Activated CD8-positive, alpha-beta T cell treated with anti-CD3 and anti-CD28 coated beads for 36 hours (primary cell): ENCODE measurements at regions of chr5 and their contacts with region 1.

Region 1: GRCh38 chr5:108260117-108260857 is 121.6 kb downstream of the FBXL17 start:
- DNase-seq: peak; percentile 79
- ATAC-seq: peak; percentile 85
- H3K4me3 Mint-ChIP-seq: peak overlapping the region; percentile 55
- H3K27ac Mint-ChIP-seq: no peak overlapping the region
- H3K4me1 Mint-ChIP-seq: peaks cover 7% of the 10 kb centered on the region
- H3K27me3 Mint-ChIP-seq: no peaks in the 10 kb centered on the region
- CTCF ChIP-seq: peak; percentile 90

Region 2: DNA sequence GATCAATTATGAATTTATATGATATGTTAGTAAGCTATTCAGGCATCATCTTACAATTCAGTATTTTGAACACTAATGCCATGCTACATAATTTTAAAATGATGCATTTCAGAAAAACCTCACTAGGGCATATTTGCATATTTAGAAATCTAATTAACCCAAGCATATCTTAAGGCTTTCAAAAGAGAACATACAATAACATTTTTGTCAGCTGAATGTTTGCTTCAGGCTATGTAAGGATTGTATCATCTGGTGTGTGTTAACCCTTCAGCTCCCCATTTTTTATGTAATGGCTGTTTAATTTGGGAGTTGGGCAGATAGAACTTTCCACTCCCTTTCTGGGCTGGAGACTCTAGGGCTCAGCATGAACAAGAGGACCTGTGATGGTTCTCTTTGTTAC is 290.4 kb before region 1 on chr5:
- CTCF ChIA-PET with region 1: no interaction called
- POLR2A ChIA-PET with region 1: no interaction called
- intact Hi-C with region 1: no loop called
- DNase-seq: no peak
- ATAC-seq: no peak
- H3K4me3 Mint-ChIP-seq: no peak overlapping the region
- H3K27ac Mint-ChIP-seq: no peak overlapping the region
- H3K4me1 Mint-ChIP-seq: no peaks in the 10 kb centered on the region
- H3K27me3 Mint-ChIP-seq: no peaks in the 10 kb centered on the region
- CTCF ChIP-seq: no peak

Region 3: GRCh38 chr5:108238936-108239887 is 21.1 kb before region 1 on chr5:
- CTCF ChIA-PET with region 1: interaction called, 26 read pairs
- POLR2A ChIA-PET with region 1: no interaction called
- intact Hi-C with region 1: no loop called
- DNase-seq: no peak
- ATAC-seq: no peak
- H3K4me3 Mint-ChIP-seq: no peak overlapping the region
- H3K27ac Mint-ChIP-seq: no peak overlapping the region
- H3K4me1 Mint-ChIP-seq: no peaks in the 10 kb centered on the region
- H3K27me3 Mint-ChIP-seq: no peaks in the 10 kb centered on the region
- CTCF ChIP-seq: no peak

Region 4: GRCh38 chr5:108271127-108271526 is 10.8 kb after region 1 on chr5:
- CTCF ChIA-PET with region 1: interaction called, 35 read pairs
- POLR2A ChIA-PET with region 1: no interaction called
- intact Hi-C with region 1: no loop called
- DNase-seq: no peak
- ATAC-seq: no peak
- H3K4me3 Mint-ChIP-seq: no peak overlapping the region
- H3K27ac Mint-ChIP-seq: no peak overlapping the region
- H3K4me1 Mint-ChIP-seq: peaks cover 2% of the 10 kb centered on the region
- H3K27me3 Mint-ChIP-seq: no peaks in the 10 kb centered on the region
- CTCF ChIP-seq: no peak

Region 5: GRCh38 chr5:108276187-108277050 is 16.1 kb after region 1 on chr5:
- CTCF ChIA-PET with region 1: interaction called, 35 read pairs
- POLR2A ChIA-PET with region 1: no interaction called
- intact Hi-C with region 1: no loop called
- DNase-seq: no peak
- ATAC-seq: no peak
- H3K4me3 Mint-ChIP-seq: no peak overlapping the region
- H3K27ac Mint-ChIP-seq: no peak overlapping the region
- H3K4me1 Mint-ChIP-seq: peaks cover 19% of the 10 kb centered on the region
- H3K27me3 Mint-ChIP-seq: no peaks in the 10 kb centered on the region
- CTCF ChIP-seq: no peak

Region 6: DNA sequence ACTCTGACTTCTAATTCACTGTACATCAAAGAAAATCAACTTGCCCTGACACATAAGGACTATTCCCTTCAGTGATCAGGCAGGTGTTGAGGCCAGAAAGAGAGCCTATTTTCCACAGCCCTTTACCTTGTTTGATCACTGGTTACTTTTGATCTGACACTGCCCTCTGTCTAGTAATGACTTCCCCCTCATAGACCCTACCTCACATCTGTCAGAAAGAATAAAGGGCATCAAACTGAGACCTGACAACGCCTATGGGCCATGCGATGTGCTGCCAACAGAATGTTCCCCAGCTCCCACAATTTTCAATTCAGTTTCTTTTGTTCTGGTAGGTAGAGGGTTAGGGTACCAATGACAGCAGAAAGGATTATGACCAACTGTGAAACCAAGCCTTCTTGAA is 73.9 kb after region 1 on chr5:
- CTCF ChIA-PET with region 1: interaction called, 13 read pairs
- POLR2A ChIA-PET with region 1: no interaction called
- intact Hi-C with region 1: no loop called
- DNase-seq: no peak
- ATAC-seq: no peak
- H3K4me3 Mint-ChIP-seq: no peak overlapping the region
- H3K27ac Mint-ChIP-seq: no peak overlapping the region
- H3K4me1 Mint-ChIP-seq: no peaks in the 10 kb centered on the region
- H3K27me3 Mint-ChIP-seq: no peaks in the 10 kb centered on the region
- CTCF ChIP-seq: no peak

Region 7: GRCh38 chr5:108345541-108346171 is 85.4 kb after region 1 on chr5:
- CTCF ChIA-PET with region 1: interaction called, 70 read pairs
- POLR2A ChIA-PET with region 1: no interaction called
- intact Hi-C with region 1: loop called (anchors 2 kb)
- DNase-seq: no peak
- ATAC-seq: no peak
- H3K4me3 Mint-ChIP-seq: no peak overlapping the region
- H3K27ac Mint-ChIP-seq: no peak overlapping the region
- H3K4me1 Mint-ChIP-seq: peaks cover 2% of the 10 kb centered on the region
- H3K27me3 Mint-ChIP-seq: no peaks in the 10 kb centered on the region
- CTCF ChIP-seq: peak; percentile 58

Region 8: GRCh38 chr5:108727651-108728565 is 467.6 kb after region 1 on chr5:
- CTCF ChIA-PET with region 1: no interaction called
- POLR2A ChIA-PET with region 1: no interaction called
- intact Hi-C with region 1: no loop called
- DNase-seq: peak; percentile 61
- ATAC-seq: peak; percentile 81
- H3K4me3 Mint-ChIP-seq: peak overlapping the region; percentile 65
- H3K27ac Mint-ChIP-seq: peak overlapping the region; percentile 42
- H3K4me1 Mint-ChIP-seq: peaks cover 28% of the 10 kb centered on the region
- H3K27me3 Mint-ChIP-seq: peaks cover 29% of the 10 kb centered on the region
- CTCF ChIP-seq: no peak